Activated naive CD4-positive, alpha-beta T cell treated with anti-CD3 and anti-CD28 coated beads for 36 hours (primary cell): ENCODE measurements at regions of chr14 and their contacts with region 1.

Region 1: GRCh38 chr14:36373982-36374673 is 53.7 kb upstream of the MBIP start:
- DNase-seq: peak; percentile 87
- H3K4me3 Mint-ChIP-seq: no peak overlapping the region
- H3K27ac Mint-ChIP-seq: no peak overlapping the region
- H3K4me1 Mint-ChIP-seq: no peaks in the 10 kb centered on the region
- H3K27me3 Mint-ChIP-seq: no peaks in the 10 kb centered on the region

Region 2: DNA sequence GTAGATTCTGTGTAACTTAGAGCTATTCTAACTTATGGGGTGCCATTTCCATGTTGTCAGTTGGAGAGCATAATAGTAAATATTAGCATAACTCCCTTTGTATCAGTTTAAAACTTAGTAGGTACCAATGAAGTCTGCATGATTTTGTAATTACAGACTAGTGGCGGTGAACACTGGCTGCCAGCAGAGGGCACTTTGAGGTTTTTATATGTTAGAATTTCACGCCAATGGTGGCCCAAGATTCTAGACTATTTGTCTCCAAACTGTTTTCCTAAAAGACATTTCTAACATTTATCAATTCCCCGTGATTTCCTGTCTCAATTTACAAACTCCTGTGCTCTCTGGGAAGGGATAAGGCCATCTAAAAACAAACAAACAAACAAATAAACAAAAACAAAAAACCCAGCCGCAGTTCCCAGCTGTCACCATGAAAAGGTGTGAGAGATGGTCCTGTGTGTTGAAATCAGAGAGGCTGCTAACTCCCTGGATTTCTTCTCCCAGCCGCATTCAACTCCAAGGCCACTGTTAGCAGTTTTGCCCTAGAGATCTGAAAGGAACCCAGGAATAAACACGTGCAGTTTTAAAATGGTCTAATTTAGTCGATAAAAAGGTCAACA is 490.3 kb before region 1 on chr14:
- CTCF ChIA-PET with region 1: interaction called, 3 read pairs
- intact Hi-C with region 1: loop called (anchors 1 kb)
- DNase-seq: peak; percentile 55
- H3K4me3 Mint-ChIP-seq: no peak overlapping the region
- H3K27ac Mint-ChIP-seq: no peak overlapping the region
- H3K4me1 Mint-ChIP-seq: no peaks in the 10 kb centered on the region
- H3K27me3 Mint-ChIP-seq: peaks cover 2% of the 10 kb centered on the region

Region 3: GRCh38 chr14:36070031-36070719 is 304.0 kb before region 1 on chr14:
- CTCF ChIA-PET with region 1: interaction called, 33 read pairs
- intact Hi-C with region 1: loop called (anchors 1 kb)
- DNase-seq: peak; percentile 70
- H3K4me3 Mint-ChIP-seq: no peak overlapping the region
- H3K27ac Mint-ChIP-seq: no peak overlapping the region
- H3K4me1 Mint-ChIP-seq: no peaks in the 10 kb centered on the region
- H3K27me3 Mint-ChIP-seq: peaks cover 21% of the 10 kb centered on the region

Region 4: GRCh38 chr14:36207500-36207899 is 166.6 kb before region 1 on chr14:
- CTCF ChIA-PET with region 1: no interaction called
- intact Hi-C with region 1: loop called (anchors 1 kb)
- DNase-seq: no peak
- H3K4me3 Mint-ChIP-seq: no peak overlapping the region
- H3K27ac Mint-ChIP-seq: no peak overlapping the region
- H3K4me1 Mint-ChIP-seq: peaks cover 3% of the 10 kb centered on the region
- H3K27me3 Mint-ChIP-seq: peaks cover 6% of the 10 kb centered on the region

Region 5: DNA sequence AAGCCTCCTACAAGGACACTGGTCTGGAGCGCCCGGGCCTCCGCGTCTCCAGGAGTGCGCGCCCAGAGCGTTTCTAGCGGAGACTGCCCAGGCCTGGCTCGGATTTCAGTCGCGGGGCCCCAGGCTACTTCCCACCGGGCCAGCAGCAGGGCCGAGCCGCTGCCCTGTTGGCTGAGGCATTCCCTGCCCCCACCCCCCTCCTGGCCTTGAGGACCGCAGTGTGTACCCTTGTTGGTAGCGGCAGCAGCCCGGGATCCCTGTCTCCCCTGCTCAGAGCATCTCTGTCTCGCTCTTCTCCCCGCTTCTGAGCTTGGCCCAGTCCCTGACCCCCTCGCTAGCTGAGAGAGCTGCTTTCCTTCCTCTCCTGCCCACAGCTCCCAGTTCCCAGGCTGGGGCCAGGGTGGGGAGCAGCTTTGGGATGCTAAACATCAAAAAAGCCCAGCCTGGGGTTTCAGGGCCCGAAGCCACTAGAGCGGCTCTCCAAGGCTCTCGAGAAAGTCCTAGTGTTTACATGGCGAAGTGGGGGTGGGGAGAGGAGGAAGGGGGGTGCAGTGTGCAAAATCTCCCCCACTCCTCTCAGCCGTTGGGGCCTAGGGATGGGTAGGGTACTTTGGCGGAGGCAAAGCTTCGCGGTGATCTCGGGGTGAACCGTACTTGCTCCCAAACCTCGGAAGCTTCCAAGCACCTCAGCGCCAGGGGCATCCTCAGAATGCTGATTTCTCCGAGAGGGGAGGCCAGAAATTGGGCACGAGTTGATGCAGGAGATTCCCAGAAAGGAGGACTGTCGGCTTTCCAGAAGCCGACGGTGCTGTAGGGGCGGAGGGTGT is 139.5 kb after region 1 on chr14:
- CTCF ChIA-PET with region 1: no interaction called
- intact Hi-C with region 1: no loop called
- DNase-seq: no peak
- H3K4me3 Mint-ChIP-seq: no peak overlapping the region
- H3K27ac Mint-ChIP-seq: no peak overlapping the region
- H3K4me1 Mint-ChIP-seq: peaks cover 5% of the 10 kb centered on the region
- H3K27me3 Mint-ChIP-seq: peaks cover 72% of the 10 kb centered on the region

Region 6: GRCh38 chr14:36604757-36605505 is 230.8 kb after region 1 on chr14:
- CTCF ChIA-PET with region 1: interaction called, 4 read pairs
- intact Hi-C with region 1: loop called (anchors 2 kb)
- DNase-seq: peak; percentile 69
- H3K4me3 Mint-ChIP-seq: no peak overlapping the region
- H3K27ac Mint-ChIP-seq: no peak overlapping the region
- H3K4me1 Mint-ChIP-seq: no peaks in the 10 kb centered on the region
- H3K27me3 Mint-ChIP-seq: peaks cover 13% of the 10 kb centered on the region